Heart right ventricle (tissue), 16 donors: ENCODE measurements at regions of chr7 and their contacts with region 1.

Region 1: GRCh38 chr7:88111136-88111743 is 108.6 kb downstream of the SRI start:
- DNase-seq: no peak
- ATAC-seq: peak in 5 of 8 donors; percentile 28 to 59 (median 54)
- H3K4me3 ChIP-seq: no peak overlapping the region
- H3K27ac ChIP-seq: no peak overlapping the region
- H3K4me1 ChIP-seq: peaks cover 0 to 26% (median 4%) of the 10 kb centered on the region in 9 donors
- H3K27me3 ChIP-seq: no peaks in the 10 kb centered on the region
- CTCF ChIP-seq: peak in 8 of 9 donors; percentile 48 to 76 (median 68)

Region 2: DNA sequence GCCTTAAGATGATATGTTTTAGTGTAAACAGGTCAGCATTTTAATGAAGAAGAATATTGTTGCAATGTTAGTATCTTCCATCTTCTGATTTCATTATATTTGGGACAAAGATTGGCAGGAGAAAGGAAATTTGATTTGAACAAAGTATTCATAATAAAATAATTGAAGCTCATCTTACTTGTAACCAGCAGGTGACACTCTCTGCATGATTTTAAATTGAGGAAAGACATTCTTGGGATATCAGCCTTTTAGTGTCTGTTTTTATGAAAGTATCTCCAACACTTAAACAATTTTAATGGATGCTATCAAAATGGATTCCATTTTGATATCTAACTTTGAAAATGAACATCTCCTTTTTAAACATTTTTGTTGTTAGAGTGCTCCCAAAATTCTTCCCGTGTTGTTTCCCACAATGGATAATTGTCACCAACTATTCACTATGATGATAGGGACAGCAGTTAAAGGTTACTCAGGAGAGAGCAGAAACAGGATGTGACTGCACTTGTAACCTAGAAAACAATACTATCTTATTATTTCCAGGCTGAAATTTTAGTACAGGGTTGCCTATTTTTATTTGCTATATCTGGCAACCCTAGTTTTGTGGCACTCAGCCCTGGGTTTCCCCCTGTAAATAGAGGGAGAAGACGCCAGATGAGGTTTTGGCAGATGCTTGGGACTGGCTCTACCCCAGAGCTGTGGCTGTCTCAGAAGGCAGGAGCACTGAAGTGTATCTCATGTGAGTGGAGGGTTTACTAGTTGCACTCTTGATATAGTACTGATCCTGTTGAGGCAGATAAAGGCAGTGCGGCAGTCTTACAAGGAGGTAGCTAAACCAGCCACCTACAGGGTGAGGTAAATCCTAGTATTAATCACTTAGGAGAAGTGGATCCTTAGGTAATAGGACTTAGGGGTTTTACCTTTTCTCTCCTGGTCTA is 604.7 kb before region 1 on chr7:
- intact Hi-C with region 1: loop called in 1 of 10 experiments (anchors 10 kb)
- DNase-seq: no peak
- ATAC-seq: peak in 1 of 8 donors; percentile 22
- H3K4me3 ChIP-seq: no peak overlapping the region
- H3K27ac ChIP-seq: no peak overlapping the region
- H3K4me1 ChIP-seq: peaks cover 0 to 9% (median 0%) of the 10 kb centered on the region in 9 donors
- H3K27me3 ChIP-seq: no peaks in the 10 kb centered on the region
- CTCF ChIP-seq: peak in 8 of 9 donors; percentile 23 to 67 (median 52)

Region 3: DNA sequence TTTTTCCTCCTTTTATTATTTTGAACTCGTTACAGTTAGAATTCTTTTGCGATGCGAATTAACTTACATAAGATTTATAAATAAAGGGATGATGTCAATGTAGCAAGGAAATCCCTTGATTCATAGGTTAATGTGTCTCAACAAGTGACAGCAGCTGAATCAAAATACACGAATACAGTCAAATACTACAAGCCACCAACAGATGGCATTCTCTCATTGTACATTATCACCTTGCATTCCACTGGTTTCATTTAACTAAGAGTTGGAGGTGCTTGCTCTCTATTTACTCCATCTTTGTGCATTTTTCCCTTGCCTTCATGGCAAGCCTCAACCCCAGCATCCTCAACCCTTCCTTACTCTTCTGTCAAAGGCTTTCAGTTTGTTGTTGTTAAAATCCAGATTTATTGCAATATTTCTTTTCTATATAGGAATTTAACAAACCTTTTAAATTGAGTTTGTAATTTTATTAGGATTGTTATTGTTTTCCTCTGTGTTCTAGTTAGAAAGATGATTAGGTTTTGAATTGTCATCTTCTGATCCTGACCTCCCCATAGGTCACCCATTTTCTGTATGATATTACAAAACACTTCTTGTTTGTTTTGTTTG is 313.3 kb before region 1 on chr7:
- intact Hi-C with region 1: loop called in 9 of 10 experiments (anchors 2 to 10 kb)
- DNase-seq: no peak
- ATAC-seq: peak in 3 of 8 donors; percentile 28 to 41 (median 41)
- H3K4me3 ChIP-seq: no peak overlapping the region
- H3K27ac ChIP-seq: no peak overlapping the region
- H3K4me1 ChIP-seq: no peaks in the 10 kb centered on the region
- H3K27me3 ChIP-seq: no peaks in the 10 kb centered on the region
- CTCF ChIP-seq: peak; percentile 29 to 73 (median 62)

Region 4: GRCh38 chr7:87806150-87806549 is 305.1 kb before region 1 on chr7:
- intact Hi-C with region 1: loop called in 3 of 10 experiments (anchors 5 to 10 kb)
- DNase-seq: no peak
- ATAC-seq: no peak
- H3K4me3 ChIP-seq: no peak overlapping the region
- H3K27ac ChIP-seq: no peak overlapping the region
- H3K4me1 ChIP-seq: no peaks in the 10 kb centered on the region
- H3K27me3 ChIP-seq: no peaks in the 10 kb centered on the region
- CTCF ChIP-seq: no peak

Region 5: GRCh38 chr7:87886875-87887274 is 224.4 kb before region 1 on chr7:
- intact Hi-C with region 1: loop called in 2 of 10 experiments (anchors 5 to 10 kb)
- DNase-seq: no peak
- ATAC-seq: no peak
- H3K4me3 ChIP-seq: no peak overlapping the region
- H3K27ac ChIP-seq: no peak overlapping the region
- H3K4me1 ChIP-seq: no peaks in the 10 kb centered on the region
- H3K27me3 ChIP-seq: no peaks in the 10 kb centered on the region
- CTCF ChIP-seq: peak in 8 of 9 donors; percentile 18 to 65 (median 54)

Region 6: DNA sequence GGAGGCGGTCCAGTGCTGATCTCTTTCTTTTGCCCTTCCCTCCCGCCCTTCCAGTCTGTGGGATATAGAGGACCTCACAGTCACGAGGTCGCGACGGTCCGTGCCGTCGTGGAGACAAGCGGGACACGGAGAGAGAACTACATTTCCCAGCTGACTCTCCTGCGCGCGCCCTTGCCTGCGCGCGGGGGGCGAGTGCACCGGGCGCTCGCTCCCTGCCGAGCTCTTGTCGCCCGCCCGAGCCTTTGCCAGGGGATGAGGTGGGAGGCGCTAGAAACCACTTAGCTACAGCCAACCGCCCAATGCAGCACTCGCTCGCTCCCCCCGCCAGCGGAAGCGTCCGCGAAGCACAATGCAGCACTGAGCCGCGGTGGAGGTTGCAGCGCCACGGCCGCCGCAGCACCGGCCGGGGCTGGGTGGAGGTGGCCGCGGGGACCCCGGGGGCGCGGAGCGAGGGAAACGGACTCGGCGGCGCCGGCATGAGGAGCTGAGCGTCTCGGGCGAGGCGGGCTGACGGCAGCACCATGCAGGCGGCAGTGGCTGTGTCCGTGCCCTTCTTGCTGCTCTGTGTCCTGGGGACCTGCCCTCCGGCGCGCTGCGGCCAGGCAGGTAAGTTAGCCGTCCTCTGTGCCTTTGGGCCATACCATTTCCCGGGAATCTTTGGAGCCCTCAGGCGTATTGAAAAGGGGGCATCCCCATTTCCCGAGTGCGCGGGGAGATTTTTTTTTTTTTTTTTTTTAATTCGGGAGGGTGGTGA is 177.1 kb before region 1 on chr7 and contains the start of gene ADAM22:
- intact Hi-C with region 1: loop called in 1 of 10 experiments (anchors 10 kb)
- DNase-seq: peak; percentile 83 to 89
- ATAC-seq: peak; percentile 97 to 100 (median 99)
- H3K4me3 ChIP-seq: peak within 1 kb of the TSS; percentile 52 to 93 (median 78)
- H3K27ac ChIP-seq: peak within 1 kb of the TSS in 8 of 10 donors; percentile 6 to 56 (median 37)
- H3K4me1 ChIP-seq: peaks cover 0 to 19% (median 11%) of the 10 kb centered on the region in 9 donors
- H3K27me3 ChIP-seq: peaks cover 0 to 26% (median 0%) of the 10 kb centered on the region in 7 donors
- CTCF ChIP-seq: peak in 2 of 9 donors; percentile 25 to 33
- total RNA-seq, gene ADAM22: 0.62 to 3.7 (median 1.9) TPM

Region 7: GRCh38 chr7:88046839-88047573 is 64.2 kb before region 1 on chr7:
- intact Hi-C with region 1: loop called in 1 of 10 experiments (anchors 5 kb)
- DNase-seq: no peak
- ATAC-seq: no peak
- H3K4me3 ChIP-seq: no peak overlapping the region
- H3K27ac ChIP-seq: peak overlapping the region in 1 of 10 donors; percentile 55
- H3K4me1 ChIP-seq: peaks cover 0 to 20% (median 10%) of the 10 kb centered on the region in 9 donors
- H3K27me3 ChIP-seq: no peaks in the 10 kb centered on the region
- CTCF ChIP-seq: no peak

Region 8: GRCh38 chr7:88368686-88369085 is 257.4 kb after region 1 on chr7:
- intact Hi-C with region 1: no loop called
- DNase-seq: no peak
- ATAC-seq: no peak
- H3K4me3 ChIP-seq: no peak overlapping the region
- H3K27ac ChIP-seq: no peak overlapping the region
- H3K4me1 ChIP-seq: no peaks in the 10 kb centered on the region
- H3K27me3 ChIP-seq: no peaks in the 10 kb centered on the region
- CTCF ChIP-seq: no peak